Activated CD4-positive, alpha-beta T cell treated with anti-CD3 and anti-CD28 coated beads, Interleukin-2, amount 10 ng/mL, durations not matched to agents 24 days and 14 days (primary cell): ENCODE measurements at regions of chr4 and their contacts with region 1.

Region 1: DNA sequence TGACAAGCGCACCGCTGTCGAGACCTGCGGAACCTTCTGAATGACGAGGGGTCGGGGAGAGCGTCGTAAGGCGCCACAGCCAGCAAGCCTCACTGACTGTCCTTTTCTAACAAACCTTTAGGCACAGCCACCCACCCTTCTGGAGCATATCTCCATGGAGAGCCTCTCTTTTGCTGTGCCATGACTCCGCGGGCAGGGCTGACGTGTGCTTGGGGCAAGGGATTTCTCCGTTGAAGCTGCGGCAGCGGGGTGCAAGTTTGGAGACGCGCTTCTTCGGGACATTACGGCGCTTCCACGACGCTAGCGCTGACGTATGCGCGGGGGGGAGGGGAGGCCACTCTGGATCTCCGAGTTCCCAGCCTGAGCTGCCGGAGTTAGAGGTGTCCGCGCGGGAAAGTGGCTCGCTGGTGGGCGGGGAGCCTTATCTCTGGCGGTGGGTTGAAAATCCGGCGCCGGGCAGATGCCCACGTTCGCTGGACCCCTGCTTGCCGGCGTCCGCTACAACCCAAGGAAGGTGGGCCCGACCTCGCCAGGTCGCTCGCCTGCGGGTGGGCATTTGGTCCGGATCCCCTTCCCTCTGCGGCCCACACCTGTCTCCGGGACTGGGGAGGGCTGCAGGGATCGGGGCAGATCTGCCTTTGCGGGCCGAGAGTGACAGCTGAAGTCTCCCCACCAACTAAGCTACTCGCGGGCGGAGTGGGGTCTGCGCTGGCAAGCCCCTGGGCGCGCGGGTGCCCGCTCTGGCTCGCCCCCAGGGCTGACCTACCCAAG is 543 bp upstream of the SLC10A7 start:
- DNase-seq: peak; percentile 96
- H3K4me3 Mint-ChIP-seq: no peak overlapping the region
- H3K27ac Mint-ChIP-seq: no peak overlapping the region
- H3K4me1 Mint-ChIP-seq: peaks cover 18% of the 10 kb centered on the region
- H3K27me3 Mint-ChIP-seq: no peaks in the 10 kb centered on the region

Region 2: GRCh38 chr4:145956288-145956890 is 565.9 kb before region 1 on chr4:
- intact Hi-C with region 1: no loop called
- DNase-seq: peak; percentile 82
- H3K4me3 Mint-ChIP-seq: no peak overlapping the region
- H3K27ac Mint-ChIP-seq: no peak overlapping the region
- H3K4me1 Mint-ChIP-seq: peaks cover 2% of the 10 kb centered on the region
- H3K27me3 Mint-ChIP-seq: peaks cover 6% of the 10 kb centered on the region

Region 3: GRCh38 chr4:146175541-146176453 is 346.5 kb before region 1 on chr4 and contains the start of gene LSM6:
- intact Hi-C with region 1: loop called (anchors 2 kb)
- DNase-seq: peak; percentile 95
- H3K4me3 Mint-ChIP-seq: peak within 1 kb of the TSS; percentile 84
- H3K27ac Mint-ChIP-seq: peak within 1 kb of the TSS; percentile 89
- H3K4me1 Mint-ChIP-seq: peaks cover 27% of the 10 kb centered on the region
- H3K27me3 Mint-ChIP-seq: no peaks in the 10 kb centered on the region
- total RNA-seq, gene LSM6: 60.4 and 60.7 TPM in 2 replicates

Region 4: GRCh38 chr4:146450524-146450923 is 71.8 kb before region 1 on chr4:
- intact Hi-C with region 1: loop called (anchors 2 kb)
- DNase-seq: no peak
- H3K4me3 Mint-ChIP-seq: peak overlapping the region; percentile 56
- H3K27ac Mint-ChIP-seq: peak overlapping the region; percentile 84
- H3K4me1 Mint-ChIP-seq: peaks cover 23% of the 10 kb centered on the region
- H3K27me3 Mint-ChIP-seq: no peaks in the 10 kb centered on the region

Region 5: DNA sequence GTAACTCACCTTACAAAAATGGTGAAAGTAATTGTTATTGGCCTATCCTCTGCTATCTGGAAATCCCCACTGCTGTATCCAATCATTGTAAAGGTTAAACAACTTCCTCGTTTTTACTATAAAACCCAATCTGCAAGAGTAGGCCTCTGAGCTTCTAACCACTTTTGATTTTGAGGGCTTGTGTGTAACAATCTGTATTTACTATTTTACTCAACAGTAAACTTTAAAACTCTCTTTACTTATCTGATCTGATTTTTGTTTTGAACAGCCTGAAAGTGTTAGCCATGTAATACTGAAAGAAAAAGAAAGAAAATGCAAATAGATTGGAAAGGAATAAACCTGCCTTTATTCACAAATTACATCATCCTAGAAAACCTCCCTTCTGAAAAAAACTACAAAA is 63.7 kb before region 1 on chr4:
- intact Hi-C with region 1: loop called (anchors 1 kb)
- DNase-seq: peak; percentile 71
- H3K4me3 Mint-ChIP-seq: peak overlapping the region; percentile 57
- H3K27ac Mint-ChIP-seq: peak overlapping the region; percentile 83
- H3K4me1 Mint-ChIP-seq: peaks cover 14% of the 10 kb centered on the region
- H3K27me3 Mint-ChIP-seq: no peaks in the 10 kb centered on the region

Region 6: GRCh38 chr4:146506272-146506671 is 16.0 kb before region 1 on chr4:
- intact Hi-C with region 1: loop called (anchors 2 kb)
- DNase-seq: no peak
- H3K4me3 Mint-ChIP-seq: no peak overlapping the region
- H3K27ac Mint-ChIP-seq: peak overlapping the region; percentile 54
- H3K4me1 Mint-ChIP-seq: peaks cover 17% of the 10 kb centered on the region
- H3K27me3 Mint-ChIP-seq: no peaks in the 10 kb centered on the region